Posterior vena cava (tissue), 2 donors: ENCODE measurements at regions of chr5 and their contacts with region 1.

Region 1: DNA sequence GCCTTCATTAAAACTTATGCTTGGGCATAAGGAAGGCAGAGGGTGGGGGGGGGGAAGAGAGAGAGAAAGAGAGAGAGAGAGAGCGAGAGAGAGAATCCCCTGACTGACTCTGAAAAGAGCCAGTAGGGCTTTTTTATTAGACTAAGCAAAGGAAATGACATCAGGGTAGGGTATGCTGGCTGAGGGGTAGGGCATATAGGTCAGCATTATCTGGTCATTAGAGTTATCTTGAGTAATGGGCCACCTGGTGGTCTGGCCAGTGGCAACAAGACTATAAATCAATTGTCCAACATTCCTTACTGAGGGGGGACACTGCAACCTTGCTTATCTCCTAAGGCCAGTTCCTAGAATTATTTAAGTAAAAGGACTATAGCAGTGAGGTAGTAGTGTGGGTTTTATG is 67.2 kb downstream of the TSSK1B start:
- DNase-seq: no peak

Region 2: DNA sequence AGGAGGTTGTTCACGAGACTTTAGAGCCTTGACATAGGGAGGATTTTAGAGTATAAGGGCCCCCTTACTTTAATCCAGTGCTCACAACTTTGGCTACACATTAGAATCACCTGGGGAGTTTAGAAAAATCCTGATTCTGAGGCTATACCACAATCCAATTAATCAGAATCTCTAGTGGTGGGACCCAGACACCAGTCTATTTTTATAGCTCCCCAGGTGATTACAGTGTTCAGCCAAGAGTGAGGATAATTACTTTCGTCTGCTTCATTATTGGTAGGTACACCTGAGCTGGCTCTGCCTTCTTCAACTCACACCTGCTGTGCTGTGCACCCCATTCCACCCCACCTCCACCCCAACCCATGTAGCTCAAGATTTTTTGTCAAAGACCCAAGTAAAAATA is 807.2 kb before region 1 on chr5:
- intact Hi-C with region 1: no loop called
- DNase-seq: no peak

Region 3: GRCh38 chr5:113344973-113345940 is 22.3 kb before region 1 on chr5:
- intact Hi-C with region 1: loop called in 1 of 2 experiments (anchors 1 kb)
- DNase-seq: no peak

Region 4: GRCh38 chr5:113606298-113607134 is 238.9 kb after region 1 on chr5:
- intact Hi-C with region 1: no loop called
- DNase-seq: peak; percentile 80